Common myeloid progenitor, CD34-positive (primary cell): ENCODE measurements at regions of chr1 and their contacts with region 1.

Region 1: GRCh38 chr1:206808615-206809014 is 36.3 kb upstream of the IL10 start:
- DNase-seq: peak; percentile 63 to 84 (median 81)
- H3K4me3 ChIP-seq: no peak overlapping the region
- H3K27ac ChIP-seq: no peak overlapping the region
- H3K4me1 ChIP-seq: no peaks in the 10 kb centered on the region
- H3K27me3 ChIP-seq: no peaks in the 10 kb centered on the region

Region 2: GRCh38 chr1:206725109-206725963 is 83.3 kb before region 1 on chr1:
- CTCF ChIA-PET with region 1: interaction called, 250 read pairs
- POLR2A ChIA-PET with region 1: no interaction called
- DNase-seq: peak; percentile 57 to 79 (median 76)
- H3K4me3 ChIP-seq: no peak overlapping the region
- H3K27ac ChIP-seq: no peak overlapping the region
- H3K4me1 ChIP-seq: peaks cover 24 to 62% (median 50%) of the 10 kb centered on the region in 4 experiments
- H3K27me3 ChIP-seq: no peaks in the 10 kb centered on the region

Region 3: DNA sequence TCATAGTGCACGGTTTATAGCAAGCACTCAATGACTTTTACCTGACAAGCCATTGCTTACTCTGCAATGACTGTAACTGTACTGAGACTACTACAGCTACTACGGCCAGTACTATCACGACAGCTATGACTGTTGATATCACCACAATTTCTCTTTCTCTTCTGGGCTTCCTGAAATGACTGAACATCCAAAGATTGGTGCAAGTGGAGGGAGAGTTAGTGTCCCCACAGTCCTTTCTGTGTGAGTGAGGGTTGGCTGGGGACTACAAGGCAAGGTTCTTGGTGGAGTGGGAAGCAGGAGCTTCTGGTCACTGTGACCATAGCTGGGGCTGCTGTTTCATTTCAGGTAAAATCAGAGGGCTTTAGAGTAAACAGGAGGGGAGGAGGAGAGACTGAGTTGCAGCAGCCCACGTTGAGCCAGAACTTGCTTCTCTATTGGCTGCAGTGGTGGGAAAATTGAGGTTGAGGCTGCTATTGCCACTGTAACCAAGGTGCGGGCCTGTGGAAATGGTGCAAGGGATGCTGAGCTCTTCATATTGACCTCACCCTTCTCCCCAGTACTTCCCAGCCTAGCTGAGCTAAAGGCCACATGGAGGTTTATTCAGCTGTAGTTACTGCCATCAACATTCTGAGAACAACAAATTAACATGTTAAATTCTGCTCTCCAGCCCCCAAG is 22.3 kb before region 1 on chr1:
- CTCF ChIA-PET with region 1: interaction called, 11 read pairs
- POLR2A ChIA-PET with region 1: no interaction called
- DNase-seq: no peak
- H3K4me3 ChIP-seq: no peak overlapping the region
- H3K27ac ChIP-seq: no peak overlapping the region
- H3K4me1 ChIP-seq: peaks cover 12 to 49% (median 21%) of the 10 kb centered on the region in 4 experiments
- H3K27me3 ChIP-seq: no peaks in the 10 kb centered on the region

Region 4: DNA sequence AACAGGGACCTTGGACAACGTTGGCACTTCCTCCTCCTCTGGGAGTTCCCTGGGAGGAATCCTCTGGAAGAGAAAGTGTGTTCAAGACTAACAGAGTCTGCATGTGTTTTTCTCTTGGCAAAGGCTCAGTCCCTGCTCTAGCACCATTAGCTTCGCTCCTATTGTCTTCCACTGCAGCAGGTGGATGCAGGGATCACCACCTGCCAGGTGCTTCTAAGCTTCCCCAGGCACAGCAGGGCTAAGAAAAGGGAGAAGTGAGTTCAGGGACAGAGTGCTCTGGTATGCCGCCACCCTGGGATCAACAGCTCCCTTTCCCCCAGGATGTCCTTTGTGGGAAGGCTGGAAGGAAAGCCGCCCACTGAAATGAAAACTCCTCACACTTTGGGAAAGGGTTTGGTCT is 12.9 kb after region 1 on chr1:
- CTCF ChIA-PET with region 1: interaction called, 35 read pairs
- POLR2A ChIA-PET with region 1: no interaction called
- DNase-seq: no peak
- H3K4me3 ChIP-seq: no peak overlapping the region
- H3K27ac ChIP-seq: no peak overlapping the region
- H3K4me1 ChIP-seq: peaks cover 6 to 27% (median 12%) of the 10 kb centered on the region in 4 experiments
- H3K27me3 ChIP-seq: no peaks in the 10 kb centered on the region

Region 5: DNA sequence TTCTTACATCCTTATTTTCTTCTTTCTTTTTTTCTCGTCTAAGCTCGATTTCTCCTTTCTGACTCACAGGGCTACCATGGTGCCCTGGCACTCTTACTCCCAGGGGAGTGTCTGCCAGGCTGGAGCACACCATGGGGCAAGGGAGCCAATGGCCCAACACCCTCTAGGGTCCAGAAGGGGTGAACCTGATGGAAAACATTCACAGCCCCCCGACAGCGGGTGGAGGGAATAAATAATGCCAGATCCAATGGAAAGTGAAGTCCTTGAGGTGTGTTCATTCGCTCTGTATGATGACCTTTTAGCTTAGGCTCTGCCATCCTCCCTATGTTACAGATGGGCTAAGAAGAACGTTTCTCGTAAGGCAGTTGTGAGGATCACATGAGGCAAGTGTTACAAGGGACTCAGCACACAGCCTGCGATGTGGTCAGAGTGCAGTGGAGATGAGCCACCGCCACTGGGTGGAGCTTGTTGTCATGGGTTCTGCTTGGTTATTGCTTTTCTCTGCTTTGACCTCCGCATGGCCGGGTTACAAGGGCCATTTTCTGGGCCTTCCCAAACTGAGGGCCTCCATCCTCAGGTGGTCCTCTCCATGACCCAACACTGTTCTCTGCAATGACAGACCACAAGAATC is 116.6 kb after region 1 on chr1:
- CTCF ChIA-PET with region 1: interaction called, 10 read pairs
- POLR2A ChIA-PET with region 1: no interaction called
- DNase-seq: peak in 1 of 3 donors; percentile 57
- H3K4me3 ChIP-seq: no peak overlapping the region
- H3K27ac ChIP-seq: no peak overlapping the region
- H3K4me1 ChIP-seq: peaks cover 20 to 49% (median 46%) of the 10 kb centered on the region in 4 experiments
- H3K27me3 ChIP-seq: no peaks in the 10 kb centered on the region

Region 6: DNA sequence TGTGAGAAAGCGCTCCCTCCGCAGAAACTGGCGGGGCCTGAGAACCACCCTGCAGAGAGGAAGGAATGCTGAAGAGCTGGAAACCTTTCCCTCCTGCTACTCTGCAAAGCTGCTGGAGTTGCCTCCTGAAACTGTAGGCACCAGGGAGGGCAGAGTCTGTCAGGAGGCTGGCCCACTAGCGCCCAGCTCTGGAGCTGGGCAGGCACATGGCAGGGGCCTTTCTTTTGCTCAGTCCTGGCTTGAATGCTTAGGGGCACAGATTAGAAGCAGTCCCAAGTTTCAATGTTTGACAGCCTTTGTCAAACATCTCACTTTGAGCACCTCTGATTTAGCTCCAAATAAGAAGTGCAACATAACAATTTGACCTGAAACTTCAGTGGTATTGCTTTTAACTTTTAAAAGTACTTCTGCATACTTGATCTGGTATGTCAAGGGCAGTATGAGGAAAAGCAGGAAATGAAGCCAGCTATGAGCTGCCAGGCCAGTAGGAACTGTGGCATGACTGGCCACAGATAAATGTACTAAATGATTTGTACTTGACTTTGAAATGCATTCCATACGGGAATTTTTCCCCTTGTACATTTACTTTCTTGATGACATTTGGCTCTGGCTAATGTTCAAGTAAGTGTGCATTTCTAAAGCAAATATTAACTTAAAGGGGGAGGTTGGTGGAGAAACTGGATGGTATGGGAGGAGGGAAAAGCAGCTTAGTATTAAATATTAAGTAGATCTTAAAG is 216.7 kb after region 1 on chr1:
- CTCF ChIA-PET with region 1: no interaction called
- POLR2A ChIA-PET with region 1: no interaction called
- DNase-seq: peak in 2 of 3 donors; percentile 26 to 28
- H3K4me3 ChIP-seq: no peak overlapping the region
- H3K27ac ChIP-seq: peak overlapping the region in 1 of 2 experiments; percentile 78
- H3K4me1 ChIP-seq: peaks cover 12 to 33% (median 26%) of the 10 kb centered on the region in 4 experiments
- H3K27me3 ChIP-seq: no peaks in the 10 kb centered on the region

Region 7: DNA sequence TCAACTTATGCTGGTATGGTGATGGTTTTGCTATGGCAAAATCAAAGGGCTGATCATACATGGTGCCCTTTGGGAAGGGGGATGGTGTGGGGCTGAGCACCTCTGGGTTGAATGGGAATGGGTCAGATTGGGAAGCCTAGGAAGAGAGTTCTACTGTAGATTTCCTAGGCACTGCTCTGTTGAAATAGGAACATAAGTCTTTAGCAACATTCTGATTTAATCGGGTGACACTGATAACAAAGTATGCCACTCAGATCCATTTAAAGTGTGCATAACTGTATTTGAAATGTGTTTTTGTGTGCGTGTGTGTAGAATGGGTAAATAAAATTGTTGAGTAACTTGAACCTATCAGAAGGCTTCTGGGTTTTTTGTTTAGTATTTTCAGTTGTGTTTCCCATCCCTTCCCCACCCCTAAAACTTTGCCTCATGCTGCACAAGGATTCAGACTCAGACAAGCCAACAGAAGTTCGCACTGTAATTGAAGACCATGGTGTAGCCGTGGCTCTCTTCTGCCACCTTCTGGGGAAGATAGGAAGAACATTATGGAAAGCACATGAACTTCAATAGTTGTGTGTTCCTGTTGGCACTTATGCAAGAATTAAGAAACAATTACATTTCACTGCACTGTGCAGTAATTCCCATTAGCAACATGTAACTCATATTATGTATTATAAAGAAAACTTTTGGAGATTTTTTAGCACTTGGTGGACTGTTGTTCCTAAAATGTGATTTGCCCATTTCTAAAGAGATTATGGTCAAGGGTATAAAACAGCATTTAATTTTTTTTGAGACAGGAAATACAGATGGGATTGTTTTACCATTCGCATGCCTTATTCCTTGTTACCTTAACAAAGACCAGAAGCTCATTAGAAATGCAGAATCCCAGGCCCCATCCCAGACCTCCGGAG is 269.1 kb after region 1 on chr1:
- CTCF ChIA-PET with region 1: no interaction called
- POLR2A ChIA-PET with region 1: no interaction called
- DNase-seq: peak; percentile 77 to 90 (median 83)
- H3K4me3 ChIP-seq: no peak overlapping the region
- H3K27ac ChIP-seq: no peak overlapping the region
- H3K4me1 ChIP-seq: peaks cover under 1 to 4% (median 2%) of the 10 kb centered on the region in 4 experiments
- H3K27me3 ChIP-seq: no peaks in the 10 kb centered on the region